Activated CD4-positive, alpha-beta T cell treated with anti-CD3 and anti-CD28 coated beads for 36 hours (primary cell): ENCODE measurements at regions of chr5 and their contacts with region 1.

Region 1: GRCh38 chr5:176415952-176416924 is at the start of gene CLTB:
- DNase-seq: peak; percentile 94
- ATAC-seq: peak; percentile 96
- H3K4me3 Mint-ChIP-seq: peak within 1 kb of the TSS; percentile 74
- H3K27ac Mint-ChIP-seq: peak within 1 kb of the TSS; percentile 76
- H3K4me1 Mint-ChIP-seq: peaks cover 36% of the 10 kb centered on the region
- H3K27me3 Mint-ChIP-seq: no peaks in the 10 kb centered on the region
- total RNA-seq, gene CLTB: 39.3 to 47.8 TPM

Region 2: GRCh38 chr5:176361437-176362232 is 54.6 kb before region 1 on chr5 and contains the start of gene KIAA1191:
- CTCF ChIA-PET with region 1: no interaction called
- POLR2A ChIA-PET with region 1: no interaction called
- intact Hi-C with region 1: loop called in 1 of 2 experiments (anchors 2 kb)
- DNase-seq: peak; percentile 97
- ATAC-seq: peak; percentile 91
- H3K4me3 Mint-ChIP-seq: peak within 1 kb of the TSS; percentile 95
- H3K27ac Mint-ChIP-seq: peak within 1 kb of the TSS; percentile 94
- H3K4me1 Mint-ChIP-seq: peaks cover 32% of the 10 kb centered on the region
- H3K27me3 Mint-ChIP-seq: no peaks in the 10 kb centered on the region
- total RNA-seq, gene KIAA1191: 42.2 to 52.6 TPM

Region 3: DNA sequence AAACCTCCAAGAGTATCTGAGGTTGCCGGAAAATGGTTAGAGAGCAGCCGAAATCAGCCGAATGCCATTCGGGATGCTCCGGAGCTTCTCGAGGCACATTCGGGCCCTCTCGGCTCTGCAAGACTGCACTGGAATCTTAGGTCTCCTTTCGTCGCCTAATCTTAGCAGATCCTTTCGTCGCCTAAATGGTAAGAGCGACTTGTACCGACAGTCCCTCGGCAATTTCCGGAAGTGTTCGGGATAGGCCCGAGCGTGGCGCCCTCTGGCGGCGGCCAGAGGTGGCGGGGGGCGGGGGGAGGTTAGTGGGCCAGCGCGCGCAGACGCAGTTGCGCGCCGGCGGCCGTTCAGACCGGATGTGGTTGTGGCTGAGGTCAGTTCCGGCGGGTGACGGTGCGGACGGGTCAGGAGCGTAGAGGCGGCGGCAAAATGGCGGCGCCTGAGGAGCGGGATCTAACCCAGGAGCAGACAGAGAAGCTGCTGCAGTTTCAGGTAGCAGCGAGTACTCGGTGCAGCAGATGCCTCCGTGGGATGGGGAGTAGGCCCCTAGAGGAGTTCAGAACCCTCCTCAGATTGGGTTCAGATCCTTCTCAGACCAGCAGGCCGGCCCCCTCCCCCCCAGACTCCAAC is 31.9 kb after region 1 on chr5 and contains the start of gene FAF2:
- CTCF ChIA-PET with region 1: interaction called, 22 read pairs
- POLR2A ChIA-PET with region 1: no interaction called
- intact Hi-C with region 1: loop called (anchors 1 kb)
- DNase-seq: peak; percentile 98
- ATAC-seq: peak; percentile 98
- H3K4me3 Mint-ChIP-seq: peak within 1 kb of the TSS; percentile 90
- H3K27ac Mint-ChIP-seq: peak within 1 kb of the TSS; percentile 97
- H3K4me1 Mint-ChIP-seq: peaks cover 31% of the 10 kb centered on the region
- H3K27me3 Mint-ChIP-seq: no peaks in the 10 kb centered on the region
- total RNA-seq, gene FAF2: 37.6 to 44.8 TPM

Region 4: DNA sequence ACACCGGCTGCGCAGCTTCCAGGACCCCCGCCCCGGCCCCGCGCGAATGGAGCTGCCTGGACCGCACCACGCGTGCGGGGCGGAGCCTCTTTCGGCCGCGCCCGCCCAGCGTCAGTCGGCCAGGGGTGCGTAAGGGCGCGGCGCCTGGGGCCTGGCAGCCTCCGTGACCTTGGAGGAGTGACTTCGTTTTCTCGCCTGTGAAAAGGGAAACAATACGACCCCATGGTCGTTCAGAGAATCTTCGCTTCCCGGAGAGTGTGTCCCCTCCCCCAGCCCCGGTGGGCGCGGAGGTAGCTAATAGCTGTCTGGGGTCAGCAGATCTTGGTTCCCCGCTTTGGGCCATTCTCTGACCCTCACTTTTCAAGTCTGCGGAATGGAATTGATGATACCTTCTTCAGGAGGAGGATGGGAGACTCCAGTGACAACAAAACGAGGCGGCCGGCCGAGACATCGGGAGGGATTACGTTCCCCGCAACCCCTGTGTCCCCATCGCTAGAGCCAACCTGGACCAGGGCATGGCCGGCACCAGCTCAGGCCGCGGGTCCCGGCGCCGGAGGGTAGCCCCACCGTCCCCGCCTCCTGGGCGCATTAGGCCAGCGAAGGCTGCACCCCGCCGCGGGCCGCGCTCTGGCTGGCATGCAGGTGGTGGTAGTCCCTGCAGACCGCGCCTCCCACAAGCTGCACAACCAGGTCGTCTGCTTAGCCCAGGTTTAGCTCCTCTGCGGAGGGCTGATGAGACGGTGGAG is 127.4 kb after region 1 on chr5:
- CTCF ChIA-PET with region 1: interaction called, 4 read pairs
- POLR2A ChIA-PET with region 1: no interaction called
- intact Hi-C with region 1: loop called (anchors 1 to 10 kb)
- DNase-seq: peak; percentile 87
- ATAC-seq: peak; percentile 75
- H3K4me3 Mint-ChIP-seq: peak overlapping the region; percentile 85
- H3K27ac Mint-ChIP-seq: peak overlapping the region; percentile 93
- H3K4me1 Mint-ChIP-seq: peaks cover 61% of the 10 kb centered on the region
- H3K27me3 Mint-ChIP-seq: no peaks in the 10 kb centered on the region

Region 5: DNA sequence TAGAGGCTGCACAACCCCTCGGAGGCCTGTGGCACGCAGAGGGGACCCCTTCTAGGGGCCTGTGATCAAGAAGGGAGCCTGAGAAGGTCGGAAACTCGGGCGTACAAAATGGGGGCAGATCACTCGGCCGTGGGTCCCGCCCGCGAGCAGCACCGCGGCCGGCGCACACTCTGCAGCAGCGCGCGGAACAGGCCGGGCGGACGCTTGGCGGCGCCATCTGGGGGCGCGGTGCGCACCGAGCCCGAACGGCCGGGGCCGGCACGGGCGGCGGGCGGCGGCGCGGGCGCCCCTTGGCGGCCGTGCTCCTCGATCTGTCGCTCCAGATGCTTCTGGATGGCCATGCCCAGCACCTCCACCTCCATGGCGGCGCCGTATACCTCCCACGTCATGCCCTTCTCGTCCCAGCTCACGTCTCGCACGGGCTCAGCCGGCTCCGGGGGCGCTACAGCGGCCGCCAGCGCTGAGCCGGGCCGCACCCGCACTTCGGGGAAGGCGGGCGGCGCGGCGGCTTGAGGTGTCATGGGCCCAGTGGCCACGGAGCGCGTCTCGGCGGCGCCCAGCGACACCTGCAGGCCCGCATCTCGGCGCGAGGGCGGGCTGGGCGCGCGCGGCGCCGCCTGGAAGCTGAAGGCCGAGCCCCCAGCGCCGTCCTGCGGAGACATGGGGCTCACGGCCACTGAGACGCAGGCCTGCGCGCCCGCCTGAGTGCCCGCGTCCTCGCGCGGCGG is 180.6 kb after region 1 on chr5:
- CTCF ChIA-PET with region 1: no interaction called
- POLR2A ChIA-PET with region 1: no interaction called
- intact Hi-C with region 1: loop called (anchors 1 kb)
- DNase-seq: peak; percentile 81
- ATAC-seq: peak; percentile 87
- H3K4me3 Mint-ChIP-seq: peak overlapping the region; percentile 48
- H3K27ac Mint-ChIP-seq: peak overlapping the region; percentile 68
- H3K4me1 Mint-ChIP-seq: peaks cover 8% of the 10 kb centered on the region
- H3K27me3 Mint-ChIP-seq: peaks cover 2% of the 10 kb centered on the region

Region 6: GRCh38 chr5:176619203-176619568 is 202.9 kb after region 1 on chr5:
- CTCF ChIA-PET with region 1: no interaction called
- POLR2A ChIA-PET with region 1: no interaction called
- intact Hi-C with region 1: loop called in 1 of 2 experiments (anchors 1 kb)
- DNase-seq: peak; percentile 95
- ATAC-seq: peak; percentile 100
- H3K4me3 Mint-ChIP-seq: no peak overlapping the region
- H3K27ac Mint-ChIP-seq: no peak overlapping the region
- H3K4me1 Mint-ChIP-seq: peaks cover 8% of the 10 kb centered on the region
- H3K27me3 Mint-ChIP-seq: peaks cover 46% of the 10 kb centered on the region